B cell (primary cell): ENCODE measurements at regions of chr2 and their contacts with region 1.

Region 1: DNA sequence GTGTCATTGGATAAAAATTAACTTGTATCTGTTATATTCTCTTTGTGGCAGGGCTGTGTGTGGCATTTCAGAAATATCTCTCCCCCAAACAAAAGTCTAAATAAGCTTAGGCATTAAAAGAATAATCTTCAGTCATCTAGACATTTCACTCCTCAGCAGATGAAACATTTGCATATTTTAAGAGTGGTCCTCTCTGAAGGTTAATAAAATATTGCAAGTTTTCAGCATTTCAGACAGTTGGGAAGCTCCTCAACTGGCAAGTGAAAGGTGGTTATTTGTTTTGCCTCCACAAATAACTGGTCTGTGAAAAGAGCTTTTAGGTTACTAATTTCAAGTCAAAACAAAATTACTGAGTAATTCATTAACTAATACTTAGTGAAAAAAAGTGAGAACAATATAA is 462.6 kb downstream of the EPHA4 start:
- DNase-seq: no peak
- ATAC-seq: no peak
- H3K4me3 ChIP-seq: no peak overlapping the region
- H3K4me3 Mint-ChIP-seq: no peak overlapping the region
- H3K27ac ChIP-seq: no peak overlapping the region
- H3K27ac Mint-ChIP-seq: no peak overlapping the region
- H3K4me1 ChIP-seq: no peaks in the 10 kb centered on the region
- H3K4me1 Mint-ChIP-seq: peaks cover 2% of the 10 kb centered on the region
- H3K27me3 ChIP-seq: no peaks in the 10 kb centered on the region
- H3K27me3 Mint-ChIP-seq: peaks cover 5% of the 10 kb centered on the region
- CTCF ChIP-seq: no peak

Region 2: GRCh38 chr2:221156062-221156742 is 46.6 kb after region 1 on chr2:
- CTCF ChIA-PET with region 1: no interaction called
- POLR2A ChIA-PET with region 1: no interaction called
- intact Hi-C with region 1: loop called (anchors 1 kb)
- DNase-seq: no peak
- ATAC-seq: no peak
- H3K4me3 ChIP-seq: no peak overlapping the region
- H3K4me3 Mint-ChIP-seq: no peak overlapping the region
- H3K27ac ChIP-seq: no peak overlapping the region
- H3K27ac Mint-ChIP-seq: no peak overlapping the region
- H3K4me1 ChIP-seq: no peaks in the 10 kb centered on the region
- H3K4me1 Mint-ChIP-seq: no peaks in the 10 kb centered on the region
- H3K27me3 ChIP-seq: no peaks in the 10 kb centered on the region
- H3K27me3 Mint-ChIP-seq: peaks cover 7% of the 10 kb centered on the region
- CTCF ChIP-seq: no peak

Region 3: DNA sequence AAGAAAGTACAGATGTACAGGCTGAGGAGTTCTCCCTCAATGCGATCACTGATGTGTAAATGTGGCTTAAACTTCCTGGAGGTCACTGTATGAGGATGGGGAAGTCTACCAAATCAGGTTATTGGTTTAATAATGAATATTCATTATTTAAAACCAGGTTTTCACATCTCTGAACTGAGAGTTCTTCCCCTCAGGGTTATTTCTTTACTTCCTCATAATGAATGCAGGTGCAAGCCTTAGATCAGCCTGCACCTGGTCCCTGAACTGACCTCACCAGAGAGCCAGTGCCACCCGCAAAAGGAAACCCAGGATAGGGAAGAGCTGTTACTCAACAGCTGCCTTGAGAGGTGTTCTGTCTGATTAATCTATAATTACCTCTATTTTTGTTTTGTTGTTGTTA is 93.6 kb after region 1 on chr2:
- CTCF ChIA-PET with region 1: no interaction called
- POLR2A ChIA-PET with region 1: no interaction called
- intact Hi-C with region 1: no loop called
- DNase-seq: peak; percentile 83
- ATAC-seq: peak; percentile 89
- H3K4me3 ChIP-seq: no peak overlapping the region
- H3K4me3 Mint-ChIP-seq: peak overlapping the region; percentile 68
- H3K27ac ChIP-seq: no peak overlapping the region
- H3K27ac Mint-ChIP-seq: peak overlapping the region; percentile 72
- H3K4me1 ChIP-seq: peaks cover 17 to 33% of the 10 kb centered on the region in 2 donors
- H3K4me1 Mint-ChIP-seq: peaks cover 43% of the 10 kb centered on the region
- H3K27me3 ChIP-seq: no peaks in the 10 kb centered on the region
- H3K27me3 Mint-ChIP-seq: no peaks in the 10 kb centered on the region
- CTCF ChIP-seq: no peak